ENCODE measurements at regions of chr6 and their contacts with region 1.

Region 1: GRCh38 chr6:107114213-107114905 is 956 bp downstream of the BEND3 start:
- DNase-seq: peak; percentile 96
- H3K4me3 ChIP-seq: peak overlapping the region; percentile 56 to 62
- H3K27ac ChIP-seq: peak overlapping the region; percentile 33 to 93; a peak in 3 of 4 replicates
- H3K4me1 ChIP-seq: peaks cover 10 to 16% of the 10 kb centered on the region in 2 experiments; a peak in 2 of 4 replicates
- H3K27me3 ChIP-seq: no peaks in the 10 kb centered on the region; the same call in 1 of the 2 replicates
- CTCF ChIP-seq: peak; percentile 72
- EP300 ChIP-seq: no peak; a peak in 1 of 4 replicates
- RAD21 ChIP-seq: peak; percentile 67

Region 2: DNA sequence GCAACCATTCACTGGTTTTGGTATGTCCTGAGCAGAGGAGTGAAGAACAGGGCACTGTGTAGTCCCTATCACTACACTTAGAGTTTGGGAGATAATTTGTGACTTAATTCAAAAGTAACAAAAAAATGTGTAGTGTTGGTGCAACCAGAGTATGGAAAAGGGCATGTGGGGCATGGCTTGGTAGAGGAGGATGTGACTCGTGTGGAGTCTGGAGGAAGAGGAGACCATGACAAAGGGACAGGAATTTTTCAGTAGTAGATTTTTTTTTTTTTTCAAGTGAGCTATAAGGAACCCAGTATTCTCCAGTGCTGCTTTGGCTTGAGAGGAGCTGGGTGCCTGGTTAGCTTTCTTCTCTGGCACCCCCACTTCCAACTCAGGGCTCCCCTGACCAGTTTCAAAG is 81.2 kb before region 1 on chr6:
- CTCF ChIA-PET with region 1: interaction called, 17 read pairs
- POLR2A ChIA-PET with region 1: interaction called, 3 read pairs
- DNase-seq: no peak
- H3K4me3 ChIP-seq: no peak overlapping the region
- H3K27ac ChIP-seq: no peak overlapping the region; a peak in 1 of 4 replicates
- H3K4me1 ChIP-seq: no peaks in the 10 kb centered on the region
- H3K27me3 ChIP-seq: no peaks in the 10 kb centered on the region
- CTCF ChIP-seq: no peak
- EP300 ChIP-seq: no peak
- RAD21 ChIP-seq: no peak

Region 3: DNA sequence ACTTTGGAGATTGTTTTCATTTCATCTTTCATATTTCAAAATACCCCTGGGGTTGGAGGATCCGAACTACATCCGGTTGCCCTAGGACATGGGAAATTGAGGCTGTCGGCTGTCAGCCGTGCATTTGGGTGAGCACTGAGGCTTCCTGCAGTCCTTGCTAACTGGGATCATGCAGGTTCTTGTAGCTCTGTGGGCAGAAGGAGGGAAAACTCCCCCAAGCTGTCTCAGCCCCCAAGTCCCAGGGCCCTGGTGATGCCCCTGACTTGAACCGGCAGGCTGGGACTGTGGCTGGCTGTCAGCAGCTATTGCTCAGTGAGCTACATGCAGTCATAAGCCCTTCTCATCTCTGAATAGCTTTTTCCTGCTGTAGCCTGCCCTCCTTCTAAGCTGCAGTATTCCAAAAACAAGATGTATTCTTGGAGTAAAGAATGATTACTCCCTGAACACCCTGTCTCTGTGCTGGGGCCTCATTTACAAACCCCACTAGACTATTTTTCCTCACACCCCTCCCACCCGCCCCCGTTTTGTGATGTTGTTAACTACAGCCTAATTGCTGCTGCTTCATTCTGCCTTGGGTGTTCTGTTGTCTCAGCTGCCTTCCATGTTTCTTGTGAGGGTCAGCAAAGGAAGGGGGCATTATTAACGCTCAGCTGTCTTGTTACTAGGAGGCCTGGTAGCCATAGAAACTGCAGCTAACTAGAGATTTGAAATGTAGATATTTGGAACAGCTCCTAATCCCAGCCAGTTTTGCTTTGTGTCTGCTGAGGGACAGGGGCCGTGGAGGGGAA is 68.3 kb before region 1 on chr6:
- CTCF ChIA-PET with region 1: interaction called, 10 read pairs
- POLR2A ChIA-PET with region 1: interaction called, 4 read pairs
- DNase-seq: peak; percentile 61
- H3K4me3 ChIP-seq: no peak overlapping the region
- H3K27ac ChIP-seq: peak overlapping the region in 1 of 2 experiments; percentile 82; a peak in 2 of 4 replicates
- H3K4me1 ChIP-seq: peaks cover 0 to 19% of the 10 kb centered on the region in 2 experiments; a peak in 1 of 4 replicates
- H3K27me3 ChIP-seq: no peaks in the 10 kb centered on the region
- CTCF ChIP-seq: no peak
- EP300 ChIP-seq: no peak
- RAD21 ChIP-seq: no peak

Region 4: GRCh38 chr6:107102414-107102990 is 11.9 kb before region 1 on chr6:
- CTCF ChIA-PET with region 1: interaction called, 12 read pairs
- POLR2A ChIA-PET with region 1: interaction called, 4 read pairs
- DNase-seq: no peak
- H3K4me3 ChIP-seq: no peak overlapping the region
- H3K27ac ChIP-seq: no peak overlapping the region
- H3K4me1 ChIP-seq: no peaks in the 10 kb centered on the region; a peak in 1 of 4 replicates
- H3K27me3 ChIP-seq: no peaks in the 10 kb centered on the region
- CTCF ChIP-seq: no peak
- EP300 ChIP-seq: no peak
- RAD21 ChIP-seq: no peak

Measured in SK-N-SH (cell line).